CD4-positive, alpha-beta memory T cell (primary cell): ENCODE measurements at regions of chr7 and their contacts with region 1.

Region 1: GRCh38 chr7:105367458-105367857 is 21.3 kb downstream of the SRPK2 start:
- DNase-seq: no peak
- H3K4me3 ChIP-seq: no peak overlapping the region
- H3K4me3 Mint-ChIP-seq: no peak overlapping the region
- H3K27ac ChIP-seq: no peak overlapping the region
- H3K27ac Mint-ChIP-seq: peak overlapping the region in 1 of 7 donors; percentile 77
- H3K4me1 ChIP-seq: peaks cover 25% of the 10 kb centered on the region
- H3K4me1 Mint-ChIP-seq: peaks cover 23 to 57% (median 34%) of the 10 kb centered on the region in 4 donors
- H3K27me3 ChIP-seq: no peaks in the 10 kb centered on the region
- H3K27me3 Mint-ChIP-seq: no peaks in the 10 kb centered on the region

Region 2: GRCh38 chr7:105352018-105352612 is 15.3 kb before region 1 on chr7:
- CTCF ChIA-PET with region 1: interaction called, 8 read pairs
- POLR2A ChIA-PET with region 1: interaction called, 13 read pairs
- intact Hi-C with region 1: no loop called
- DNase-seq: peak; percentile 81 to 87 (median 82)
- H3K4me3 ChIP-seq: no peak overlapping the region
- H3K4me3 Mint-ChIP-seq: peak overlapping the region; percentile 78 to 89 (median 84)
- H3K27ac ChIP-seq: peak overlapping the region; percentile 49
- H3K27ac Mint-ChIP-seq: peak overlapping the region; percentile 80 to 97 (median 96)
- H3K4me1 ChIP-seq: peaks cover 84% of the 10 kb centered on the region
- H3K4me1 Mint-ChIP-seq: peaks cover 47 to 74% (median 59%) of the 10 kb centered on the region in 4 donors
- H3K27me3 ChIP-seq: no peaks in the 10 kb centered on the region
- H3K27me3 Mint-ChIP-seq: no peaks in the 10 kb centered on the region